Motor neuron (in vitro differentiated cells): ENCODE measurements at regions of chr15 and their contacts with region 1.

Region 1: DNA sequence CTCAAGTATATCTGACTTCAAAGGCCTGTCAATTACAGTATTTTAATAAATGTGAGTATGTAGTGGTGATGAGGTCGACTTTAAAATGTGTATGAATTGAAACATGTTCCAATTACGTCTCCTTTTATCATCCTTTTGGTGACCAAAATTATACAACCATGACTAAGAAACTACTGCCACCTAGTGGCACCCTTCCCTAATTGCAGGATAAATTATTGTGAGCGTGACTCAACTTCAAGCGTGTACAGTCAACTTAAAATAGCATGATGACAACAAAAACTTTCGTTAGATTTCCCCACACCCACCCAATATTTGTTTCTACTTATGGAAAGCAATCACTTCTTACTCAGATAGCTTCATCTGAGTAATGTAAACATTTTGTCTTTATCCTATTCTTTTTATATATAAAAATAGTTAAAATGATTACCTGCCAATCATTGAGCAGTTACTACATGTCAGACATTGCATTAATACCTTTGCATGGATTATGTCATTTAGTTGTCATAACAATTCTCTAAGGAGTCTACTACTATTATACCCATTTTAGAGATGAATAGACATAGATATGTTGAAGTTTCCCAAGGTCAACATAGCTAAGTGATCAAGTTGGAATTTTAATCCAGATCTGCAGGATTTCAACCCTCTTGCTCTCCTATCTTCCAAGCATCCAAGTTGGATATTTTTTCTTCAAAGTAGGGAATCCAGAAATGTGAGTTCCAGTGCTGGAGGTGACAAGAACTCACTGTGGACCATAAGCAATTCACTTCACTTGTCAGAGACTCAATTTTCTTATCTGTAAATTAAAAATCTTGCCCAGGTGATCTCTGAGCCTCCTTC is 106.0 kb downstream of the MEX3B start:
- ATAC-seq: peak in 2 of 8 experiments; percentile 22 to 37
- H3K4me3 ChIP-seq: no peak overlapping the region
- H3K27ac ChIP-seq: peak overlapping the region in 1 of 2 donors; percentile 5
- H3K4me1 ChIP-seq: peaks cover 10 to 21% of the 10 kb centered on the region in 2 donors

Region 2: GRCh38 chr15:81480645-81481053 is 459.2 kb before region 1 on chr15:
- in situ Hi-C with region 1: loop called in 1 of 9 experiments (anchors 25 kb)
- ATAC-seq: peak; percentile 64 to 90 (median 77)
- H3K4me3 ChIP-seq: no peak overlapping the region
- H3K27ac ChIP-seq: no peak overlapping the region
- H3K4me1 ChIP-seq: peaks cover 3 to 4% of the 10 kb centered on the region in 2 donors

Region 3: DNA sequence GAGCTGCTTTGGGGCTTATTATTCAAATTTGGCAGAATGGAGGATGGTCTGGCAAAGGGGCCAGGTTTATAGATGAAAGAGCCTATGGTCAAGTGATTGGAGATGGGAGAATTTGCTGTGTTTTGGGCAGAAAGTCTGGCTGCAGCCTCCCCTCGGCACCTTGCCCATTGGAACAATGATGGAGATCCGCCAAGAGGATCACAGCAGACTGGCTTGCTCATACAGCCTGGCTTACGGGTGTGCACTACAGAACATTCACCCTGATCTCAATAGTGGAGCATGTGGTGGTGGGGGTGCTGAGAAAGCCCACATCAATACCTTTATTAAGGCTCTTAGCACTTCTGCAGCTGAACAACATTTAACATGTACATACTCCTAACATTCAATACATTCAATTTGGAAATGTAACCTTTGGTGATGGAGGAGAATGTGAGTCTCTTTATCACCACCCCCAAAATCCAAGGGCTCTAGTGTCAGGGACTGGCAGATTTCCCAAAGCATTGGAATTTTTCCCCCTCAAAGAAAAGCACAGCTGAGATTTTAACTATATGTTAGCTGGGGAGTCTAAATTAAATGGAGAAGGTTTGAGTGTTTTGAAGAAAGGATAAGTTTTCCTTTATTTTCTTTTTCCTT is 447.4 kb before region 1 on chr15:
- in situ Hi-C with region 1: loop called in 2 of 9 experiments (anchors 10 to 25 kb)
- ATAC-seq: peak in 2 of 8 experiments; percentile 48 to 53
- H3K4me3 ChIP-seq: no peak overlapping the region
- H3K27ac ChIP-seq: no peak overlapping the region
- H3K4me1 ChIP-seq: no peaks in the 10 kb centered on the region

Region 4: DNA sequence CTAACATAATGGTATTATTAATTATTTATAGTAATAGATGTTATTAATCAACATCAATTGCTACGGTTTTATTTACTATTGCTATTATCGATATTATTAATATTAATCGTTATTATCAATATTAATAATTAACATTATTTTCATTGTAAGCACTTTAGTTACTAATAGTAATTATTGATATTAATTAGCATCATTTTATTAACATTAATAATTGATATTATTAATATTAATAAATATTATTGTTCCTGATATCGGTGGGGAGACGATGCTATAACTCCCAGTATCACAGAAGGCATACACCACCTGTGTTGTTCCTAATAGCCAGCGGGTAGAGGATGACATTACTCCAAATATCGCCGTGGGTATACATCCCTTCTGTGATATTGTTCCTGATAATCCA is 229.5 kb before region 1 on chr15:
- in situ Hi-C with region 1: no loop called
- ATAC-seq: no peak
- H3K4me3 ChIP-seq: no peak overlapping the region
- H3K27ac ChIP-seq: no peak overlapping the region
- H3K4me1 ChIP-seq: no peaks in the 10 kb centered on the region

Region 5: GRCh38 chr15:82021992-82022391 is 82.2 kb after region 1 on chr15:
- in situ Hi-C with region 1: no loop called
- ATAC-seq: peak in 3 of 8 experiments; percentile 10 to 88 (median 79)
- H3K4me3 ChIP-seq: no peak overlapping the region
- H3K27ac ChIP-seq: no peak overlapping the region
- H3K4me1 ChIP-seq: peaks cover 3 to 6% of the 10 kb centered on the region in 2 donors